Right lobe of liver (tissue), 6 donors: ENCODE measurements at regions of chrX and their contacts with region 1.

Region 1: GRCh38 chrX:153953342-153953830 is 8.9 kb upstream of the RENBP start:
- DNase-seq: peak in 2 of 3 donors; percentile 62 to 72
- ATAC-seq: peak; percentile 64 to 82 (median 78)
- H3K4me3 ChIP-seq: no peak overlapping the region
- H3K27ac ChIP-seq: no peak overlapping the region
- H3K4me1 ChIP-seq: no peaks in the 10 kb centered on the region
- H3K27me3 ChIP-seq: no peaks in the 10 kb centered on the region
- CTCF ChIP-seq: peak; percentile 93 to 100 (median 97)
- POLR2A ChIP-seq: no peak

Region 2: GRCh38 chrX:152960115-152960514 is 993.3 kb before region 1 on chrX:
- intact Hi-C with region 1: loop called in 1 of 2 experiments (anchors 10 kb)
- DNase-seq: no peak
- ATAC-seq: no peak
- H3K4me3 ChIP-seq: no peak overlapping the region
- H3K27ac ChIP-seq: no peak overlapping the region
- H3K4me1 ChIP-seq: no peaks in the 10 kb centered on the region
- H3K27me3 ChIP-seq: peaks cover 0 to 4% of the 10 kb centered on the region in 2 donors
- CTCF ChIP-seq: no peak
- POLR2A ChIP-seq: no peak

Region 3: GRCh38 chrX:153763989-153764755 is 189.2 kb before region 1 on chrX and contains the start of gene PLXNB3:
- intact Hi-C with region 1: loop called (anchors 5 kb)
- DNase-seq: peak; percentile 74 to 86 (median 86)
- ATAC-seq: peak; percentile 85 to 94 (median 92)
- H3K4me3 ChIP-seq: no peak within 1 kb of the TSS
- H3K27ac ChIP-seq: no peak within 1 kb of the TSS
- H3K4me1 ChIP-seq: no peaks in the 10 kb centered on the region
- H3K27me3 ChIP-seq: no peaks in the 10 kb centered on the region
- CTCF ChIP-seq: peak; percentile 82 to 93 (median 90)
- POLR2A ChIP-seq: no peak
- total RNA-seq, gene PLXNB3: 0.55 to 1.7 (median 0.94) TPM